T-cell (primary cell): ENCODE measurements at regions of chr7 and their contacts with region 1.

Region 1: DNA sequence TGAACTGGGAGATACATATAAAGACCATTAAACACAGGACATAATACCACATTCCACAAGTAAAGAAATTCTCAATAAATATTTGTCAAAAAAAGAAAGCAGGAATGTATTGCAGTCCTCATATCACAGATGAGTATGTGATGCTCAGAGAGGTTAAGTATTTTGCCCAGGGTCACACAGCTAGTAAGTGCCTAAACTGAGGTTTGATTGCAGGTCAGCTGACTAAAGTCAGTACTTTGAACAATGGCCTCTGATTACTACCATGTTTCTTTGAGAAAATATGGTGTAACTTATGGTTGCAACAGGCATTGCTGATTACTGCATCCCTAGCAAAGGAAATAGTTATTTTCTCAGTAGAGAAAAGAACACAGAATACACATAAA is 267.1 kb downstream of the ELMO1 start:
- DNase-seq: no peak
- ATAC-seq: no peak
- H3K4me3 ChIP-seq: no peak overlapping the region
- H3K4me3 Mint-ChIP-seq: no peak overlapping the region
- H3K27ac ChIP-seq: no peak overlapping the region
- H3K27ac Mint-ChIP-seq: no peak overlapping the region
- H3K4me1 ChIP-seq: peaks cover 4% of the 10 kb centered on the region in 2 experiments
- H3K4me1 Mint-ChIP-seq: peaks cover 0 to 7% (median 4%) of the 10 kb centered on the region in 3 donors
- H3K27me3 ChIP-seq: no peaks in the 10 kb centered on the region
- H3K27me3 Mint-ChIP-seq: no peaks in the 10 kb centered on the region

Region 2: DNA sequence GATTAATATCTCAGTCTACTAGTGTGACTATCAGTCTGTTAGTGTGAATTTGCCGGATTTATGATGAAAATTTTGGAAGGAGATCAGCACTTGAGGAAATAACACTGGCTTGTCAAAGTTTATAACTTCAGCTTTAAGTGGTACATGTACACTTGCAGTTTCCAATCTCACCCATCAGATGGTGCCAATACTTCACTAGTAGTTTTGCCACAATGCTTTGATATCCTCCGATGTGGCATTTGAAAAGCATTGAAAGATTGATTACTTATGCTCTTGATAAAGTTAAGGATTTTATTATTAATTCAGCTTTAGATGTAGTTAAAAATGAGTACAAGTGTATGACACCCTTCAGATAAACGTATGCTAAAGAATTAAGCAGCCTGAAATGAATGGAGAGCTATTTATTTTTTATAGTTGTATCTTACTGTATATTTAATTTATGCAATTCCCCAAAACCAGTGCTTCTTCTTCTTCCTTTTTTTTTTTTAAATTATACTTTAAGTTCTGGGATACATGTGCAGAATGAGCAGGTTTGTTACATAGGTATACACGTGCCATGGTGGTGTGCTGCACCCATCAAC is 693.7 kb before region 1 on chr7:
- CTCF ChIA-PET with region 1: interaction called, 19 to 137 read pairs
- POLR2A ChIA-PET with region 1: interaction called in 1 of 2 experiments, 3 read pairs
- DNase-seq: peak in 22 of 35 experiments; percentile 8 to 81 (median 28)
- ATAC-seq: peak in 3 of 4 experiments; percentile 60 to 71 (median 70)
- H3K4me3 ChIP-seq: no peak overlapping the region
- H3K4me3 Mint-ChIP-seq: no peak overlapping the region
- H3K27ac ChIP-seq: no peak overlapping the region
- H3K27ac Mint-ChIP-seq: peak overlapping the region in 1 of 2 donors; percentile 61
- H3K4me1 ChIP-seq: no peaks in the 10 kb centered on the region
- H3K4me1 Mint-ChIP-seq: peaks cover 0 to 2% (median 1%) of the 10 kb centered on the region in 3 donors
- H3K27me3 ChIP-seq: peaks cover 0 to 2% of the 10 kb centered on the region in 2 experiments
- H3K27me3 Mint-ChIP-seq: peaks cover 0 to 3% of the 10 kb centered on the region in 2 donors

Region 3: GRCh38 chr7:36677769-36678437 is 503.6 kb before region 1 on chr7:
- CTCF ChIA-PET with region 1: interaction called, 4 to 13 read pairs
- POLR2A ChIA-PET with region 1: interaction called in 1 of 2 experiments, 8 read pairs
- DNase-seq: peak in 6 of 35 experiments; percentile 9 to 41 (median 14)
- ATAC-seq: peak; percentile 26 to 41 (median 34)
- H3K4me3 ChIP-seq: no peak overlapping the region
- H3K4me3 Mint-ChIP-seq: peak overlapping the region; percentile 22 to 62 (median 34)
- H3K27ac ChIP-seq: peak overlapping the region; percentile 68
- H3K27ac Mint-ChIP-seq: peak overlapping the region; percentile 84 to 86
- H3K4me1 ChIP-seq: peaks cover 17 to 27% of the 10 kb centered on the region in 2 experiments
- H3K4me1 Mint-ChIP-seq: peaks cover 44 to 54% (median 47%) of the 10 kb centered on the region in 3 donors
- H3K27me3 ChIP-seq: no peaks in the 10 kb centered on the region
- H3K27me3 Mint-ChIP-seq: no peaks in the 10 kb centered on the region

Region 4: DNA sequence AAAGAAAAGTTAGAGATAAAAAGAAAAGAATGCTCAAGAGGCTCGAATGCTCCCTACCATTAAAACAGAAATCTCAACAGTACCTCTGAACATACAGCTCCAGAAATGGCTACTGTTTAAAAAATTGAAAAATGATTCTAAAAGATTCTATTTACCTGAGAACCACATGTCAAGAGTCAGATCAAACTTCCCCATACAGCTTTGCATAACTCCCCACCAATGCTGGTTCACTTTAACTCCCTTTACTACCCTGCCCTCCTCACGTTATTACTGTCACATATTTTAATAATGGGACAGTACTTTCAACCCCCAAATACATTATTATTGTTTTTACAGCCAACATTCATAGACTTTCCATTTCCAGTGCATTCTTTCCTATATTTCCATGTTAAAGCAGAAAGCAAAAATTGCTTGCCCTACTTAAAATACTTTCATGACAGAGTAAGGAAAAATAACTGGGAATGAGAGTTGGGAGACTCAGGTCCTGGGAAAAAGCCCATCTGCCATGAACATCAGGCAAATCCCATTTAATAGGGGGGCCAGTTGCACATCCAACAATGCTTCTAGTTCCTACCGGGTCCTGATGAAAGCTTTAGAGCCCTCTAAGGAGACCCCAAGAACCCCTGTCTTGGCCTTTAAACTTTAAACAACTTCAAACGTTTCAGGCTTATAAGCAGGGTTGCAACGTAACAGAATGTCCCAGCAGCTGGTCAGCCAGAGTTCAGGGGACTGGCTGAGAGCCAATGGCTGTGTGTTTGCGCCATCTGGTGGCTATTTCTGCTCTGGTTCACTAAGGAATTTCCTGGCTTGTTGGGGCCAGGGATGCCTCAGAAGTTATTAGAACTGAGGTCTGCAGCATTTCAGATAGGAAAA is 19.7 kb after region 1 on chr7:
- CTCF ChIA-PET with region 1: interaction called, 4 to 13 read pairs
- POLR2A ChIA-PET with region 1: no interaction called
- DNase-seq: peak in 25 of 35 experiments; percentile 4 to 65 (median 25)
- ATAC-seq: peak in 1 of 4 experiments; percentile 22
- H3K4me3 ChIP-seq: no peak overlapping the region
- H3K4me3 Mint-ChIP-seq: no peak overlapping the region
- H3K27ac ChIP-seq: no peak overlapping the region
- H3K27ac Mint-ChIP-seq: peak overlapping the region in 1 of 2 donors; percentile 71
- H3K4me1 ChIP-seq: peaks cover 0 to 2% of the 10 kb centered on the region in 2 experiments
- H3K4me1 Mint-ChIP-seq: peaks cover 4 to 11% (median 4%) of the 10 kb centered on the region in 3 donors
- H3K27me3 ChIP-seq: no peaks in the 10 kb centered on the region
- H3K27me3 Mint-ChIP-seq: no peaks in the 10 kb centered on the region

Region 5: DNA sequence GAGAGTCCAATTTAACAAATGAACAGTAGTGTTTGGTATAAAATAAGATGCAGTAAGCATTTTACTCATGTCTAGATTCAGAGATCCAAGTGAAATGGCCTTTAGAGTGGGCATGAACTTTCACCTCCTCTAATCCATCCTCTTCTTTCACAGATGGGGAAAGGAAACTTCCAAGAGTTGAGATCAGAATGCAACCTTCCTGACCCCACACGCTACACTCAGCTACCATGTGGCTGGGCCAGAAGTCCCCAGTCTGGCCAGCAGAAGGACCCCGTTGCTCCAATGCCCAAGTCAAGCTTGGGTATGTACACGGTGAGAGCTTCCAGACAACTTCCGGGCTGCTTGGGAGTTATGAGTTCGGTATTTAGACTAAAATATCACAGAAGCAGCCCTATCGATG is 39.1 kb after region 1 on chr7:
- CTCF ChIA-PET with region 1: no interaction called
- POLR2A ChIA-PET with region 1: no interaction called
- DNase-seq: no peak
- ATAC-seq: no peak
- H3K4me3 ChIP-seq: no peak overlapping the region
- H3K4me3 Mint-ChIP-seq: no peak overlapping the region
- H3K27ac ChIP-seq: no peak overlapping the region
- H3K27ac Mint-ChIP-seq: no peak overlapping the region
- H3K4me1 ChIP-seq: no peaks in the 10 kb centered on the region
- H3K4me1 Mint-ChIP-seq: peaks cover 6 to 11% (median 10%) of the 10 kb centered on the region in 3 donors
- H3K27me3 ChIP-seq: no peaks in the 10 kb centered on the region
- H3K27me3 Mint-ChIP-seq: no peaks in the 10 kb centered on the region